ENCODE measurements at regions of chr6 and their contacts with region 1.

Region 1: DNA sequence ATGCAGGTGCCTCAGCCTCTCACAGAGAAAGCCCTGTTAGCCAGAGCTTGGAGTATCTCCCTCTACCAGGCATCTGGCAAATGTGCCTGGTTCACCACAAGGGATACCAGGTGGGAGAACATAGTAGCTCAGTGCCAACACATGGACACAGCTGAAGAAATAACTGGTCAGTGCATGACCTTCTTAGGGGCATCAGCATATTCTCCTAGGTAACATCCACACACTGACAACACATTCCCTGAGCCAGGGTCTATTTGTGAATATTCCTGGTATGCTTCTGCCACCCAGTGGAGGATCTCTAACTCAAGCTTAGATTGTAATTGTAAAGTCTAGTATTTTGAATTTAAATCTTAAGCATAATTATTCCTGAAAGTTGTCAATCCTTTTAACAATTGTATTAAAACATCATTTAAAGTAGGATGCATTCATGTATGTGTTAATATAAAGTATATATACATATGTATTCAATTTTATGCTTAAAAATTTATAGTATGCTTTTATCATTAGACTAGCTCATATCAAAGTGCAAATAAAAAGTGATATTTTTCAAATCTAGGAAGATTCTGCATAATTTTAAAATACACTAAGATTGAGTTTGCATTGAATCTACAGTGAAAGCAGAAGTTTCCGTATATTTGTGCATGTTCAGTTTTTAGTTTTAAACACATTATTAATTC is 45.3 kb upstream of the COL21A1 start:
- DNase-seq: no peak
- ATAC-seq: peak; percentile 87 to 92

Region 2: GRCh38 chr6:55276745-55277530 is 1015.7 kb before region 1 on chr6:
- intact Hi-C with region 1: loop called in 1 of 2 experiments (anchors 5 kb)
- DNase-seq: peak; percentile 33
- ATAC-seq: peak; percentile 78 to 91

Region 3: GRCh38 chr6:55445648-55446204 is 846.9 kb before region 1 on chr6:
- intact Hi-C with region 1: loop called in 1 of 2 experiments (anchors 2 kb)
- DNase-seq: no peak
- ATAC-seq: no peak

Region 4: GRCh38 chr6:55980627-55981211 is 311.9 kb before region 1 on chr6:
- intact Hi-C with region 1: loop called (anchors 1 to 5 kb)
- DNase-seq: no peak
- ATAC-seq: no peak

Region 5: DNA sequence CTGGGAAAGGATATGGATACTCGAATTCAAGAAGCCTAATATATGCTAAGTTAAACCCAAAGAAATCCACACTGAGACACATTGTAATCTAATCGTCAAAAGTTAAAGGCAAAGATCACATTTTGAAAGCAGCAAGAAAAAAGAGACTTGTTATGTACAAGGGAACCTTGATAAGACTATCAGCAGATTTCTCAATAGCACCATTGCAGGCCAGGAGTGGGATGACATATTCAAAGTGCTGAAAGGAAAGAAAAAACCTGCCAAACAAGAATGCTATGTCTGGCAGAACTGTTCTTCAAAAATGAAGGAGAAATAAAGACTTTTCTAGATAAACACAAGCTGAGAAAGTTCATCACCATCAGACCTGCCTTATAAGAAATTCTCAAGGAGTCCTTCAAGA is 120.5 kb before region 1 on chr6:
- intact Hi-C with region 1: no loop called
- DNase-seq: no peak
- ATAC-seq: no peak

Region 6: GRCh38 chr6:56227071-56227879 is 65.4 kb before region 1 on chr6:
- intact Hi-C with region 1: no loop called
- DNase-seq: no peak
- ATAC-seq: no peak

Region 7: GRCh38 chr6:56243518-56244070 is 49.0 kb before region 1 on chr6:
- intact Hi-C with region 1: no loop called
- DNase-seq: no peak
- ATAC-seq: no peak

Region 8: GRCh38 chr6:56713254-56713672 is 420.6 kb after region 1 on chr6:
- intact Hi-C with region 1: no loop called
- DNase-seq: peak; percentile 35
- ATAC-seq: peak; percentile 74 to 92

Measured in left cardiac atrium (tissue), 4 donors.